AG04450 (cell line): ENCODE measurements at regions of chr5 and their contacts with region 1.

Region 1: GRCh38 chr5:54443270-54443669 is 12.2 kb upstream of the HSPB3 start:
- DNase-seq: peak; percentile 24
- H3K4me3 ChIP-seq: no peak overlapping the region
- H3K27ac ChIP-seq: no peak overlapping the region
- H3K27me3 ChIP-seq: peaks cover 23% of the 10 kb centered on the region
- CTCF ChIP-seq: peak; percentile 70

Region 2: GRCh38 chr5:54347221-54347865 is 95.9 kb before region 1 on chr5:
- CTCF ChIA-PET with region 1: no interaction called
- POLR2A ChIA-PET with region 1: no interaction called
- DNase-seq: no peak
- H3K4me3 ChIP-seq: no peak overlapping the region
- H3K27ac ChIP-seq: no peak overlapping the region
- H3K27me3 ChIP-seq: no peaks in the 10 kb centered on the region
- CTCF ChIP-seq: no peak

Region 3: DNA sequence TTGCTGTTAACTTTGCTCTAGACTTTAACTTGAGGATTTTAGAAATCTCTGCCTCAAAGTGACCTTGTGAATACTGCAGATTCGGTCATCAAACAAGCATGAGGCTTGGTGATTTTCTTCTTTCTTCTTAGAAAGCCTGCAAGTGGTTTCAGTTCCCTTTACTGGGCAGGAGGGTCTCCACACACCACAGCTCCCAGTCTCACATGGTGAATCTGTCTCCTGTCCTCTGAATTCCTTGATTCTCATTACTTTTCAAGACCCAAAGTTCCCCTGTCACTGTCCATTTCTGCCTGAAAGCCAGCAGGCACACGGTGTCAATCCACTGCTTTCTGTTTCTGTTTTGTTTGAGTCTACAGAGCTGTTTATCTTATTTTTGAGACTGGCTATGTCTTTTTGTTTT is 26.4 kb after region 1 on chr5:
- CTCF ChIA-PET with region 1: interaction called, 16 read pairs
- POLR2A ChIA-PET with region 1: no interaction called
- DNase-seq: no peak
- H3K4me3 ChIP-seq: peak overlapping the region; percentile 23
- H3K27ac ChIP-seq: peak overlapping the region; percentile 77
- H3K27me3 ChIP-seq: no peaks in the 10 kb centered on the region
- CTCF ChIP-seq: no peak

Region 4: GRCh38 chr5:54895816-54896341 is 452.6 kb after region 1 on chr5:
- CTCF ChIA-PET with region 1: interaction called, 17 read pairs
- POLR2A ChIA-PET with region 1: no interaction called
- DNase-seq: no peak
- H3K4me3 ChIP-seq: no peak overlapping the region; the same call in 1 of the 2 replicates
- H3K27ac ChIP-seq: no peak overlapping the region
- H3K27me3 ChIP-seq: peaks cover 2% of the 10 kb centered on the region
- CTCF ChIP-seq: peak; percentile 73